Activated CD4-positive, alpha-beta memory T cell treated with anti-CD3 and anti-CD28 coated beads for 36 hours (primary cell): ENCODE measurements at regions of chr1 and their contacts with region 1.

Region 1: DNA sequence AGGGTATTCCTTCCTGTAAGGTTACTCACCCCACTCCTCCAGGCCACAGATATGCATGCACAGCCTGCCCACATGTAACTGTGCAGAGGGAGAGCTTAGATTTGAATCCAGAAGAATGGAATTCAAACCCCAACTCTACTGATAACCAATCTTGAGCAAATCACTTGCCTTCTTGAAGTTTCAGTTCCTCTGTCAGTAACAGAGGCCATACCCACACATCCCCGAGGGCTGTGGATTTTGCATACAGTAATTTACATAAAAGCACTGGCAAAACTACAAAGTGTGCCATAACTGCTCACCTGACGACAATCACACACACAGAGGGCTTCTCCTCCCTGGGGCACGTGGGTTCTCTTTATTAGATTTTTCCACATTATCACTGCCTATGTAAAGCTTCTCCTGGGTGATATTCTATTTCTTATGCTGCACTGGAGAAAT is 18.6 kb downstream of the CD247 start:
- DNase-seq: peak; percentile 54
- H3K4me3 Mint-ChIP-seq: no peak overlapping the region
- H3K27ac Mint-ChIP-seq: peak overlapping the region; percentile 87
- H3K4me1 Mint-ChIP-seq: peaks cover 99% of the 10 kb centered on the region
- H3K27me3 Mint-ChIP-seq: no peaks in the 10 kb centered on the region

Region 2: GRCh38 chr1:166354411-166354810 is 1145.3 kb before region 1 on chr1:
- CTCF ChIA-PET with region 1: no interaction called
- POLR2A ChIA-PET with region 1: no interaction called
- intact Hi-C with region 1: no loop called
- DNase-seq: no peak
- H3K4me3 Mint-ChIP-seq: no peak overlapping the region
- H3K27ac Mint-ChIP-seq: no peak overlapping the region
- H3K4me1 Mint-ChIP-seq: no peaks in the 10 kb centered on the region
- H3K27me3 Mint-ChIP-seq: peaks cover 2% of the 10 kb centered on the region

Region 3: DNA sequence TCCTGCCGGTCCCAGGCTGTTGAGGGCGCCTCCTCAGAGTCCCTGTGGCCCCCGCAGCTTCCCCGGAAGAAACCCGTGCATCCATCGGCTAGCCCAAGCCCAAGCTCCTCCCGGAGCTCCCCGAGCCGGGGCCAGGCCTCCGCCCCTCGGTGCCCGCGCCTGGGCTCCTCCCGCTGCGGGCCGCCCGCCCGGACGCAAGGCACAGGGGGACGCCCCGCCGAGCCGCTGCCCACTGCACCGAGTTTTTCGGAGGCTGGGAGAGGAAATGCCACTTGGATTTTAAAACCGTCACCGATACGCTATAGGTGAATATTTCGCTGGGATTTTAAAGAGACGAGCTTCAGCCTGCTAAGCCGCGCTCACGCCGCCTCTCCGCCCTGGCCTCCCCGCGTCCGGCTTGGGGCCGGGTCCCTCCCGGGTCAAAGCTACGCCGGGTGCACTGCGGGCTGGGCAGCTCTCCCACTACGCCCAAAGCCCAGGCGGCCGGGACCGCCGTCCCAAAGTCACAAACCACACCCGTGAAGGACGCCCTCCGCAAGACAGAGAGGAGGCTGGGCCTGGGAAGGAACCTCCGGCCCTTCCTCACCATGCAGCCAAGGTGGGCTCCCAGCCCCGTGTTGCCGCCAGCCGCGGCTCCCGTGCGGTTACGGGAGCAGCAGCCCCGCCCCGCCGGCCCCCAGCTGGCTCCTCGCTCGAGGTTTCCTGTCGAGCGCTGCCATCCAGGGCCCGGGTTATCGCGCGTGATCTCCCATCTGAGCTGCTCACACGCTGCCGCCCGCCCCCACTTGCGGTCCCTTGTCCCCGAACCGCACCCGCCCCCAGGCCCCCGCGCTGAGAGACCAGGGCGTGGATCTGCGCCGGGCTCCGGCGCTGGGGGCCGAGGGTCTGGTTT is 44.5 kb before region 1 on chr1:
- CTCF ChIA-PET with region 1: interaction called, 21 read pairs
- POLR2A ChIA-PET with region 1: interaction called, 30 read pairs
- intact Hi-C with region 1: loop called (anchors 1 kb)
- DNase-seq: peak; percentile 88
- H3K4me3 Mint-ChIP-seq: peak overlapping the region; percentile 78
- H3K27ac Mint-ChIP-seq: peak overlapping the region; percentile 84
- H3K4me1 Mint-ChIP-seq: peaks cover 64% of the 10 kb centered on the region
- H3K27me3 Mint-ChIP-seq: no peaks in the 10 kb centered on the region

Region 4: GRCh38 chr1:167482184-167482583 is 17.5 kb before region 1 on chr1:
- CTCF ChIA-PET with region 1: interaction called, 5 read pairs
- POLR2A ChIA-PET with region 1: interaction called, 7 read pairs
- intact Hi-C with region 1: loop called (anchors 2 kb)
- DNase-seq: peak; percentile 82
- H3K4me3 Mint-ChIP-seq: peak overlapping the region; percentile 21
- H3K27ac Mint-ChIP-seq: peak overlapping the region; percentile 88
- H3K4me1 Mint-ChIP-seq: peaks cover 93% of the 10 kb centered on the region
- H3K27me3 Mint-ChIP-seq: no peaks in the 10 kb centered on the region

Region 5: GRCh38 chr1:167510244-167510643 is 10.6 kb after region 1 on chr1:
- CTCF ChIA-PET with region 1: interaction called, 60 read pairs
- POLR2A ChIA-PET with region 1: interaction called, 115 read pairs
- intact Hi-C with region 1: loop called (anchors 1 kb)
- DNase-seq: no peak
- H3K4me3 Mint-ChIP-seq: peak overlapping the region; percentile 8
- H3K27ac Mint-ChIP-seq: peak overlapping the region; percentile 23
- H3K4me1 Mint-ChIP-seq: peaks cover 79% of the 10 kb centered on the region
- H3K27me3 Mint-ChIP-seq: no peaks in the 10 kb centered on the region

Region 6: DNA sequence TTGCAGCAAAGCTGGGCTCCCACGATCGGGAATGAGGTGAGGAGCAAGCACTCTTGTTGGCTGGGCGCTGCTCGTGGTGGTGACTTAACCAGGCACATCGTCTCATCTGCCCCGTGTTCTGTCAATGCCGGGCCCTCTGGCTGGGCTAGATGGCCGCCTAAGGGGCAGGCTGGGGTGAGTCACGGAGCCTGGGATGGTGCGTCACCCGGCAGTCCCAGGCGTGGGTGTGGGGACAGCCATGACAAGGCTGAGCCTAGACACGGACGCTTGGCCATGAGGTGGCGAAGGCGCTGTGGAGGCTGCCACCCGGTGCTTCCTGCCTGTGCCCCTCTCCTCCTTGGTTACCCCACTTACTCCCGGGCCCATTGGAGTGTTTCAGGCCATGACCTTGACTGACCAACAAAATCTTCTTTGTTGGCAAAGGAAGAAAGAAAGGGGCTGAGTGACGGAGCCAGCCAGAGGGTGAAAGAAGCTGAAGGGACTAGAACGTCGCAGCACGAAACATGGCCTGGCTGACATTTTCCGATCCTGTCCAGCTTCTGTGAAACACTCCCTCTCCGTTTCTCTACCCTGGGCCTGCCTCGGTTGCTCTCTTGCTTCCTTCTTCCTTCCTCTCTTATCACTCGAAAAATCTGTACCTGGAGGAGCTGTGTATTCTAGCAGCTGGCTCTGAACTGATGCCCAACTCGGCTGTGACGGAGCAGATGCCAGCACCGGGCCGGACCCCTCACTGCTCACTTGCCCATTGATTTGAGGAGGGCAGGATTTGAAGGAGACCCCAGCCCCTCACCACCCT is 18.1 kb after region 1 on chr1:
- CTCF ChIA-PET with region 1: interaction called, 60 read pairs
- POLR2A ChIA-PET with region 1: interaction called, 115 read pairs
- intact Hi-C with region 1: loop called (anchors 1 kb)
- DNase-seq: peak; percentile 96
- H3K4me3 Mint-ChIP-seq: peak overlapping the region; percentile 88
- H3K27ac Mint-ChIP-seq: peak overlapping the region; percentile 98
- H3K4me1 Mint-ChIP-seq: peaks cover 35% of the 10 kb centered on the region
- H3K27me3 Mint-ChIP-seq: no peaks in the 10 kb centered on the region

Region 7: GRCh38 chr1:167542109-167543032 is 42.7 kb after region 1 on chr1:
- CTCF ChIA-PET with region 1: interaction called, 19 read pairs
- POLR2A ChIA-PET with region 1: no interaction called
- intact Hi-C with region 1: no loop called
- DNase-seq: peak; percentile 33
- H3K4me3 Mint-ChIP-seq: no peak overlapping the region
- H3K27ac Mint-ChIP-seq: peak overlapping the region; percentile 18
- H3K4me1 Mint-ChIP-seq: peaks cover 46% of the 10 kb centered on the region
- H3K27me3 Mint-ChIP-seq: no peaks in the 10 kb centered on the region

Region 8: DNA sequence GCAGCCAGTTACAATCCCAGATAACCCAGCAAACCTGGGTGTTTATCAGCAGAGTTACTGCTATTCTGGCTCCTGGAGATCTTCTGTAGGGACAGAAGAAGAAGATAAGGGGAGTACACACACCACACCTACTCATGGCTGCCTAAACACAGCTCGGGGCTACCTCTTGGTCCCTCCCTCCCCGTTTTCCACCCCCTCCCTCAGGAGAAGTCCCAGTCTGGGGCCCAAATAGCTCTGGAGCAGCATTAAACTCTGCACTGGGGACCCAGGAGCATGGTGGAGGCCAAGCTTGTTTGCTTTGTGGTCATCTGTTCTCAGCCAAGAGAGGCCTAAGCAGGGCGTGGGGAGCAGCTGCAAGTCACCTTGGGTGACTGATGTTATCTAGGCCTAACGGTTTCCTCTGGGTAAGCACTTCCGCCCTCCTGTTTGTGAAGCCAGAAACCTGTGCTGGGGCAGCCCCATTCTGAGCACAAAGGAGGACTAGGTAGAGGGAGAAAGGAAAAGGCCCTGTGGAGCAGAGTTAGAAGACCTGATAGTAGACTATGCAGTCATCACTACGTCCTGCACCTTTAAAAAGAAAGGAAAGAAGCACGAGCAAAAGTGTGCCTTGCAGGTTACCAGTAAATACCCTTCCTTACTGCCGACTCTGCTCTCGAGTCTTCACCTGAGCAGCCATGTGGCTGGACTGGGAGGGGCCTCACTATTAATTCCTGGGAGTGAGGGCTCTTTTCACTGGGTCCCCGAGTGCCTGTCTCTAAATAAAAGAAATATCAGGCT is 128.4 kb after region 1 on chr1:
- CTCF ChIA-PET with region 1: no interaction called
- POLR2A ChIA-PET with region 1: no interaction called
- intact Hi-C with region 1: loop called (anchors 5 kb)
- DNase-seq: peak; percentile 90
- H3K4me3 Mint-ChIP-seq: peak overlapping the region; percentile 92
- H3K27ac Mint-ChIP-seq: peak overlapping the region; percentile 99
- H3K4me1 Mint-ChIP-seq: peaks cover 46% of the 10 kb centered on the region
- H3K27me3 Mint-ChIP-seq: no peaks in the 10 kb centered on the region

Region 9: GRCh38 chr1:167708940-167709389 is 209.3 kb after region 1 on chr1:
- CTCF ChIA-PET with region 1: no interaction called
- POLR2A ChIA-PET with region 1: no interaction called
- intact Hi-C with region 1: no loop called
- DNase-seq: no peak
- H3K4me3 Mint-ChIP-seq: no peak overlapping the region
- H3K27ac Mint-ChIP-seq: peak overlapping the region; percentile 16
- H3K4me1 Mint-ChIP-seq: peaks cover 38% of the 10 kb centered on the region
- H3K27me3 Mint-ChIP-seq: no peaks in the 10 kb centered on the region